ENCODE measurements at regions of chr6 and their contacts with region 1.

Region 1: DNA sequence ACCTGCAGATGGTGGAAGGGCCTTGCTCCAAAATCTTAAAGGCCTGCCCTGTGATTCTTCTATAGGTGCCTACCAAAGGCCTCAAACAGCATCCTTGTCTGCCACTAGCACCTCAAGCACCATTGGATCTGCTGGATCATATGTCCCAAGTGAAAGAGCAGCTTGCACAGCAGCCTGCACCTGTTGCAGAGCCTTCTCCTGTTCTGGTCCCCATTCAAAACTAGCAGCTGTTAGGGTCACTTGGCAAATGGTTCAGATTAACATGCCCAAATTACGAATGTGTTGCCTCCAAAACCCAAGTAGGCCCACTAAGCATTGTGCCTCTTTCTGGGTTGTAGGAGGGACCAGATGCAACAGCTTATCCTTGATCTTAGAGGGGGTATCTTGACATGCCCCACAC is 99.6 kb upstream of the F13A1 start:
- DNase-seq: no peak
- ATAC-seq: no peak
- H3K4me3 ChIP-seq: no peak overlapping the region
- H3K27ac ChIP-seq: no peak overlapping the region
- H3K4me1 ChIP-seq: no peaks in the 10 kb centered on the region
- H3K27me3 ChIP-seq: no peaks in the 10 kb centered on the region
- CTCF ChIP-seq: no peak
- EP300 ChIP-seq: no peak
- POLR2A ChIP-seq: no peak
- RAD21 ChIP-seq: no peak

Region 2: GRCh38 chr6:6328451-6328850 is 91.7 kb before region 1 on chr6:
- CTCF ChIA-PET with region 1: no interaction called
- POLR2A ChIA-PET with region 1: no interaction called
- RAD21 ChIA-PET with region 1: no interaction called
- SMC1A ChIA-PET with region 1: no interaction called
- in situ Hi-C with region 1: no loop called
- intact Hi-C with region 1: no loop called
- DNase-seq: no peak
- ATAC-seq: no peak
- H3K4me3 ChIP-seq: no peak overlapping the region
- H3K27ac ChIP-seq: no peak overlapping the region
- H3K4me1 ChIP-seq: peaks cover 30% of the 10 kb centered on the region
- H3K27me3 ChIP-seq: no peaks in the 10 kb centered on the region
- CTCF ChIP-seq: no peak
- EP300 ChIP-seq: no peak
- POLR2A ChIP-seq: no peak
- RAD21 ChIP-seq: no peak

Region 3: DNA sequence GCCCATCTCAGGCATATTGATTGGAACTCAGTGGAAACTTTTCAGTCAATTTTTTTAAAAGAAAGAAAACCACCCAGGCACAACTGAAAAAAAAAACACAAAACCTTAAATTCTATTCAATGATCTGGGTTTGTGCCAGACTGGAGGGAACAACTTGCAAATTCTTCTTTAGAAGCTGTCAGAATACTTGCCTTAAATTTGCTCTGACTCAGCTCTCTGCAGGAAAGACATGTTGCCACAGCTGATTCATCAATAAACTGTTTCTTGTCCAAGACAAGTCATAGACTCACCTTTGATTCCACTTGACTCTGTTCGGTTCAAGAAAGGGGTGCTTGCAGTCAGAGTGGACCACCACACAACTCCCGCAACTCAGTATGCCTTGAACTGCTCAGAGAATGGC is 18.2 kb after region 1 on chr6:
- CTCF ChIA-PET with region 1: interaction called, 4 read pairs
- POLR2A ChIA-PET with region 1: interaction called, 3 read pairs
- RAD21 ChIA-PET with region 1: interaction called, 3 read pairs
- SMC1A ChIA-PET with region 1: interaction called, 11 read pairs
- in situ Hi-C with region 1: no loop called
- intact Hi-C with region 1: no loop called
- DNase-seq: no peak
- ATAC-seq: no peak
- H3K4me3 ChIP-seq: no peak overlapping the region
- H3K27ac ChIP-seq: no peak overlapping the region
- H3K4me1 ChIP-seq: peaks cover 4% of the 10 kb centered on the region; the same call in 1 of the 2 replicates
- H3K27me3 ChIP-seq: no peaks in the 10 kb centered on the region
- CTCF ChIP-seq: no peak
- EP300 ChIP-seq: no peak
- POLR2A ChIP-seq: no peak
- RAD21 ChIP-seq: no peak